ENCODE measurements at regions of chr12 and their contacts with region 1.

Region 1: DNA sequence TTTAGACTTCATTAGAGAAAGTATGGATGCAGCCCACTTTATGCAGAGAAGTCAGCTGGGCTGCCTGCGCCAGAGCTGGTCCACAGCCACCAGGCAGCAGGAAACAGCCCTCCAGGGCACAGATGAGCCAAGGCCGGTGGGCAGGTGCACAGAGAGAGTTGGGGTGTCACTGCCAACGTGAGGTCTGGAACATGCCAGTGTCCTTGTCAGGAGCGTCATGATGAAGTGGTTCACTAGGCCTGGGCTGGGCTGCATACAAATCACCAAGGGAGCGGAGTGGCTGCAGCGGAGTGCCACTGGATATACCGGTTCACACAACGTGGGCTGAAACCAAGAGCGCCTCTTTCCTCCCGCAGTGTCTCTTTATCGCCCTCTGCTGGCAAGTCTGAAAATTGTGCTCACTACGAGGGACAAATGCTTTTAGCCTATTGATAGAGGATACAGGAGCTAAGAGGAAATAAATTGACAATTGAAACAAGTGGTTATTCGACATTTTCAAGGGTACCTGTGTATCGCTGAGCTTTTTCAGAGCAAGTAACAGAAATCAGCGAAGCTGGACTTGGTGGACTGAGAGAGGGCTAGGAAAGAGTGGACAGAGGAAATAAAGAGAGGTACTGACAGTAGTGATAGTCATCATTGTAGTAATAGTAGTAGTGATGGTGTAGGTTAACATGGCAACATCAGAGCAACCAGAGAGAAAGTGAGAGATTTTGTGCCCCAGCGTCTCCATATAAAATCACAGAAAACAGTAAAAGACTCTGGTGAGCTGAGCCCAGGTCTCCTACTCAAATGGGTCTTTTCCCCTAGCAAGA is 52.0 kb upstream of the ITPR2 start:
- DNase-seq: peak; percentile 89 to 94 (median 91)
- H3K4me3 ChIP-seq: peak overlapping the region in 4 of 7 experiments; percentile 11 to 62 (median 44)
- H3K27ac ChIP-seq: no peak overlapping the region
- H3K4me1 ChIP-seq: peaks cover 0 to 4% (median 1%) of the 10 kb centered on the region in 4 experiments
- H3K27me3 ChIP-seq: no peaks in the 10 kb centered on the region

Region 2: DNA sequence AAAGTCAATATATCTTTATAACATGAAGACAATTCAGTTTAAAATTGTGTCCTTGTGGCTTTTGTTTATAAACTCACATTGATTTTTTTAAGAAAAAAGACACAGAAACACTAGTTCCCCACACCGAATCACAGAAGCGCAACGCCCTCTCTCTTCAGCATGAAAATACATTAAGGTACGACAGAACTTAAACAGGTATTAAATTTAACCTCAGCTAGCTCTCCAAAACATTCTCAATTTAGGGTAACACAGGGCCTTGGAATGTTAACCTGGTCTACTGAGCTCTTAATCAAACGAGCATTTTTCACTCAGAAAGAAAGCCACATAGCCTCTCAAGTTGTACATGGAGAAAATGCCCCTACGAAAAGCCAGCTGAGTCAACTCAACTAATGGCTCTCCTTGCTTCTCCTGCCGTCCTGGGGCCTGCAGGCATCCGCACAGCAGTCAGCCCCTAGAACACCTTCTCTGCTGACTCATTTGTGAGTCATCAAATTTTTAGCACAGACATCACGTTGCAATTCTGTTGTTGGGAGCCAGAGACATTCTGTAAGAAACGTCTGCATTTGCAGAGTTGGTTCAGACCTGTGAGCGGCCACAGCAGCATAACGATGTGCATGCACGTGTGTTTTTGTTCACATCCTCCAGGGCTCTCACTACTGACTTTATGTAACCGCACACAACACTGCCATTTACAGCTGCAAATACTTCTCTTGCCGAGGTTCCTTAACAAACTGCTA is 193.6 kb before region 1 on chr12:
- CTCF ChIA-PET with region 1: no interaction called
- POLR2A ChIA-PET with region 1: no interaction called
- DNase-seq: peak; percentile 12 to 67 (median 56)
- H3K4me3 ChIP-seq: no peak overlapping the region
- H3K27ac ChIP-seq: no peak overlapping the region
- H3K4me1 ChIP-seq: no peaks in the 10 kb centered on the region
- H3K27me3 ChIP-seq: no peaks in the 10 kb centered on the region

Region 3: DNA sequence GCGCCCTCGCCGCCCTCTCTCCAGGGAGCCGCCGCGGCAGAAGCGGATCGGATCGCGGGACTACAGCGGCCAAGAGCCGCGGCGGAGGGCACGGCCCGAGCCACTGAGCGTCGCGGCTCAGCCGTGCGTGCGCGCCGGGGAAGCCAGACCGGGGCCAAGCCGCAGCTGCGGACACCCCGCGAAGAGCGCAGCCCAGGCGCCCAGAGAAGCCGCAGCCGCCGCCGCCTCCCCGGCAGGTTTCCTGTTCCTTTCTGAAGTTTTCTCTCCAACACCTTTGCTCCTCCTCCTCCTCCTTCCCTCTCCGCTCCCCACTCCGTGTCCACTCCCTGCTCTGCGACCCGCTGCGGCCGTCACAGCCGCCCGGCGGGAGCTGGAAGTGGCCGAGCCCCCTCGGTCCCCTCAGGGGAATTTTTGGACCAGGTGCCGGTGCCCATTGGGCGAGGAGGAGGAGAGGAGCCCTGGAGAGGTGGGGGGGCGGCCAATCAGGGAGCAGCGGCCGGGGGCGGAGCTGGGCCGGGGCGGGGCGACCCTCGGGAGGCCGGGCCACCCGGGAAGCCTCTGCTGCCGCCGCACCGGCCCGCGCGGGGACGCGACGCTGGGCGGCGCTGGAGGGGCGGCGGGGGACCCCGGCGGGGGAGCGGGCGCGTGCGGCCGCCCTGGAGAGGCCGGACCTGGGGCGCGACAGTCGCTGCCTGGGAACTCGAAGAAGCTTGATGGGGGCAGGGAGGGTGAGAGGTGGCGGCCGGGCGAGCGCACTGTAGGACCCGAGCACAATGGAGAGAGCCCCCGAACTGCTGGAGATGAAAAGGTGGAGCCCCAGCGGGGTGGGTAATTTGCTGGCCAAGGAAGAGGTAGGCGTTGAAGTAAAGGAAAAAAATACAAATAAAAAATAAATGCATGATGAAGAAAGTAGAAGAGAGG is 51.9 kb before region 1 on chr12 and contains the start of gene ITPR2:
- CTCF ChIA-PET with region 1: interaction called, 30 read pairs
- POLR2A ChIA-PET with region 1: no interaction called
- DNase-seq: peak; percentile 90 to 94 (median 91)
- H3K4me3 ChIP-seq: peak within 1 kb of the TSS; percentile 88 to 98 (median 92)
- H3K27ac ChIP-seq: peak within 1 kb of the TSS; percentile 87 to 93
- H3K4me1 ChIP-seq: peaks cover 14 to 43% (median 24%) of the 10 kb centered on the region in 4 experiments
- H3K27me3 ChIP-seq: no peaks in the 10 kb centered on the region

Region 4: GRCh38 chr12:26853303-26854030 is 31.5 kb before region 1 on chr12:
- CTCF ChIA-PET with region 1: interaction called, 42 read pairs
- POLR2A ChIA-PET with region 1: no interaction called
- DNase-seq: peak; percentile 72 to 88 (median 85)
- H3K4me3 ChIP-seq: no peak overlapping the region
- H3K27ac ChIP-seq: no peak overlapping the region
- H3K4me1 ChIP-seq: peaks cover 2 to 17% (median 8%) of the 10 kb centered on the region in 4 experiments
- H3K27me3 ChIP-seq: no peaks in the 10 kb centered on the region

Region 5: DNA sequence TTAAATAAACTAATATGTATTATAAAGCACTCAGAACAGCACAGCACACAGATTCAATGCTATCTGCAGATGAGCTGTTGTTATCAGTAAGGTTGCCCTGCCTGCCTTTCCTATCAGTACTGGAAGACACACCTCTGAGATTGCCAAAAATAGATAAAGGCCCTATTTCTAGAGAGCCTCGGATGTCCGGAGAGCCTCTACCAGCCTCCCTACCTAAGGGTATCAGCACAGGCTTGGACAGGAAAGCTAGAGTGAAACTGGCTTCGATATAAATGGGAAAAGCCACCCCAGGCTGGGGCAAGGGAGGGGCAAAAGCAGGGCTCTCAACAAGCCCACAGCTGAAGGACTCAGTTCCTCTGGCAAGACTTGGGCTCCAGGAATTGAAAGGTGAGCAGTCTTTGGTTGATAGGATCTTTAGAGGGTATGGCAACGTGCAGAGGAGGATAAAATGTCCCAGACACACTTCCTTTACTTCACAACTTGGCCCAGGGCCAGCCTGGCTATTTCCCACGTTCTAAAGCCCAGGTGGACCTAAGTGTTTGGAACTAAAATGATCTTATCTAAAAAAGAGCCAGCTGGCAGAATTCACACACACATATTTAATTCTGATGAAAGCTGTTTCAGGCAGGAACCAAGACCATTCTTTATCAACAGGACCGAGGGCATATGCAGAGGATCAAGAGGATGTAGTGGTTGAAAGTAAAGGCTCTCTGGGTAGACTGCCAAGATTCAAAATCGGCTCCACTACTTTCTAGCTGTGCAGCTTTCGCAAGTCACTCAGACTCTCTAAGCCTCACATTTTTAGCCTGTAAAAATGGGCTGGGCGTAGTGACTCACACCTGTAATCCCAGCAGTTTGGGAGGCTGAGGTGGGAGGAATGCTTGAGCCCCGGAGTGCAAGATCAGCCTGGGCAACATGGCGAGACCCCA is 14.2 kb before region 1 on chr12:
- CTCF ChIA-PET with region 1: interaction called, 71 read pairs
- POLR2A ChIA-PET with region 1: no interaction called
- DNase-seq: peak; percentile 50 to 91 (median 87)
- H3K4me3 ChIP-seq: peak overlapping the region in 4 of 7 experiments; percentile 3 to 53 (median 12)
- H3K27ac ChIP-seq: peak overlapping the region; percentile 8 to 60
- H3K4me1 ChIP-seq: peaks cover 12 to 54% (median 38%) of the 10 kb centered on the region in 4 experiments
- H3K27me3 ChIP-seq: no peaks in the 10 kb centered on the region

Region 6: DNA sequence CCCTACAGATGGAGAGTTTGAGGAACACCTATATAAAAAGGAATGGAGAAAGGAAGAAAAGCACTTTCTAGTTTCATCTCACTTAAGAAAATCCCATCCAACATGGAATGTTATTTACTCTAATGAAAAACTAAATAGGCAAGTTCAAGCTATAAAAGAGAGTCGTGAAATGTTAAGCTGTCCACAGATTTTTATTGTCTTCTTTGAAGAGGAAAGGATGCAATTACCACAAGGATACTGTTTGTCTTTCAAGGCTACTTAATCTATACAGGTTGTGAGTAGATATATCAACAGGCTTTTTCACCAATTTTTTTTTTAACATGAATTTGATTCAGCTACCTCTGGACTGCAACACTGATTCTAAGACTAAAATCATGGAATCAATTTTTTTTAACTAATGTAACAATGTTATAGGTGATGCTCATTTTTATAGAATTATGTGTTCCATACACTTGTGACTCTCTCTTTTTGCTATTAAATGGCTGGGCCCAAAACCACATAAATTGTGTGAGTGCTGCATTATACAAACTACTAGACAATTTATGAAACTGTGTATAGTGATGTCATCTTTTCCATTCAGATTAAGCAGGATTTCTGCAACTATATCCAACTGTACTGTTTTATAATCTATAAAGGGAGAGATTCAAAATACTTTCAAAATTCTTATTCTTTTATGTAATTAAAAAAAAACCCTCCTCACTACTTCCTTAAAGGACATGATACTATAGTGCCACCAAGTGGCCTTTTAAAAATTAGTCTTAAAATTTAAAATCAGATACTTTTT is 420.9 kb after region 1 on chr12:
- CTCF ChIA-PET with region 1: interaction called, 16 read pairs
- POLR2A ChIA-PET with region 1: no interaction called
- DNase-seq: peak; percentile 64 to 83 (median 77)
- H3K4me3 ChIP-seq: no peak overlapping the region
- H3K27ac ChIP-seq: peak overlapping the region in 1 of 2 experiments; percentile 4
- H3K4me1 ChIP-seq: peaks cover 4 to 8% (median 4%) of the 10 kb centered on the region in 4 experiments
- H3K27me3 ChIP-seq: no peaks in the 10 kb centered on the region